Vagina (tissue), 2 donors: ENCODE measurements at regions of chr9 and their contacts with region 1.

Region 1: GRCh38 chr9:122827761-122828093 is 661 bp downstream of the PDCL start:
- DNase-seq: no peak
- H3K4me3 ChIP-seq: peak overlapping the region; percentile 78 to 84
- H3K27ac ChIP-seq: peak overlapping the region; percentile 96
- H3K4me1 ChIP-seq: peaks cover 32% of the 10 kb centered on the region
- H3K27me3 ChIP-seq: no peaks in the 10 kb centered on the region
- CTCF ChIP-seq: no peak
- POLR2A ChIP-seq: no peak

Region 2: DNA sequence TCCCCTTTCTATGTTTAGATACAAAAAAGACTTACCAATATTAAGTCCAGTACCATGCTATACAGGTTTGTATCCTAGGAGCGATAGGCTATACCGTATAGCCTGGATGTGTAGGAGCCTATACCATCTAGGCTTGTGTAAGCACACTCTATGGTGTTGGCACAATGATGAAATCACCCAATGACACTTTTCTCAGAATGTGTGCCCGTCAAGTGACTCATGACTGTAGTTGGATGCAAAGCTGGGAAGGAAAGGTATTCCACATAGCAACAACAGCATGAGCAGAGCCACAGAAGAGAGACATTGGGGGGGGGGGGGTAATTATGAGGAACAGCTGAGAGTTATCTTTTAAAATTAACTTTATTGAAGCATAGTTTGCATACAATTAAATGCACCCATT is 797.8 kb before region 1 on chr9:
- intact Hi-C with region 1: loop called (anchors 5 kb)
- DNase-seq: no peak
- H3K4me3 ChIP-seq: no peak overlapping the region
- H3K27ac ChIP-seq: no peak overlapping the region
- H3K4me1 ChIP-seq: peaks cover 20% of the 10 kb centered on the region
- H3K27me3 ChIP-seq: no peaks in the 10 kb centered on the region
- CTCF ChIP-seq: no peak
- POLR2A ChIP-seq: no peak

Region 3: DNA sequence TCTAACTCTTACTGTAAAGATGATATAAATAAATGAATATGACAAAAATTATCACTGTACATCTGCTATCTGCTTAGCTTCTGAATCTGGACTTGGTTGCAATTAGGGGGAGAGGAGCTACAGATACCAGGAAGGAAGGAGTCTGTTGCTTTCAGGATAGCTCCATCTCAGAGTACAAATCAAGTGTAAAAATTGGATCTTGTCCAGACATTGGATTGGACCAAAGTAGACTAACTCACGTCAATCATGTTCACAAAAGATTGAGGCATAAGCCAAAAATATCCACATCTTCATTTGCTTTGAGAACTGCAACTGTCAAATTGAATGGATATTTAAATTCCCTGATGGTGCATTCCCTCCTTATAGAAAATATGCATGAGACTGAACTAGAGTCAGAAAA is 222.0 kb before region 1 on chr9:
- intact Hi-C with region 1: no loop called
- DNase-seq: no peak
- H3K4me3 ChIP-seq: no peak overlapping the region
- H3K27ac ChIP-seq: no peak overlapping the region
- H3K4me1 ChIP-seq: no peaks in the 10 kb centered on the region
- H3K27me3 ChIP-seq: no peaks in the 10 kb centered on the region
- CTCF ChIP-seq: no peak
- POLR2A ChIP-seq: no peak